Caco-2 (cell line): ENCODE measurements at regions of chr2 and their contacts with region 1.

Region 1: GRCh38 chr2:65264821-65265670 is 37.4 kb downstream of the ACTR2 start:
- DNase-seq: peak; percentile 47 to 68
- H3K4me3 ChIP-seq: no peak overlapping the region
- H3K4me3 Mint-ChIP-seq: no peak overlapping the region
- H3K27ac Mint-ChIP-seq: no peak overlapping the region
- H3K4me1 ChIP-seq: no peaks in the 10 kb centered on the region
- H3K4me1 Mint-ChIP-seq: peaks cover 10% of the 10 kb centered on the region
- H3K27me3 ChIP-seq: no peaks in the 10 kb centered on the region
- H3K27me3 Mint-ChIP-seq: no peaks in the 10 kb centered on the region
- CTCF ChIP-seq: peak; percentile 64 to 83

Region 2: GRCh38 chr2:65240657-65241056 is 24.4 kb before region 1 on chr2:
- CTCF ChIA-PET with region 1: no interaction called
- POLR2A ChIA-PET with region 1: no interaction called
- intact Hi-C with region 1: no loop called
- DNase-seq: no peak
- H3K4me3 ChIP-seq: no peak overlapping the region
- H3K4me3 Mint-ChIP-seq: no peak overlapping the region
- H3K27ac Mint-ChIP-seq: no peak overlapping the region
- H3K4me1 ChIP-seq: no peaks in the 10 kb centered on the region
- H3K4me1 Mint-ChIP-seq: no peaks in the 10 kb centered on the region
- H3K27me3 ChIP-seq: no peaks in the 10 kb centered on the region
- H3K27me3 Mint-ChIP-seq: no peaks in the 10 kb centered on the region
- CTCF ChIP-seq: no peak

Region 3: GRCh38 chr2:65300761-65301711 is 36.0 kb after region 1 on chr2:
- CTCF ChIA-PET with region 1: interaction called, 3 read pairs
- POLR2A ChIA-PET with region 1: no interaction called
- intact Hi-C with region 1: loop called (anchors 1 kb)
- DNase-seq: peak; percentile 76 to 80
- H3K4me3 ChIP-seq: no peak overlapping the region
- H3K4me3 Mint-ChIP-seq: peak overlapping the region; percentile 35
- H3K27ac Mint-ChIP-seq: peak overlapping the region; percentile 14
- H3K4me1 ChIP-seq: peaks cover 22% of the 10 kb centered on the region
- H3K4me1 Mint-ChIP-seq: peaks cover 23% of the 10 kb centered on the region
- H3K27me3 ChIP-seq: no peaks in the 10 kb centered on the region
- H3K27me3 Mint-ChIP-seq: no peaks in the 10 kb centered on the region
- CTCF ChIP-seq: no peak

Region 4: GRCh38 chr2:65320042-65320725 is 55.1 kb after region 1 on chr2:
- CTCF ChIA-PET with region 1: interaction called, 8 read pairs
- POLR2A ChIA-PET with region 1: no interaction called
- intact Hi-C with region 1: loop called (anchors 5 kb)
- DNase-seq: peak; percentile 69 to 80
- H3K4me3 ChIP-seq: no peak overlapping the region
- H3K4me3 Mint-ChIP-seq: peak overlapping the region; percentile 57
- H3K27ac Mint-ChIP-seq: peak overlapping the region; percentile 81
- H3K4me1 ChIP-seq: peaks cover 30% of the 10 kb centered on the region
- H3K4me1 Mint-ChIP-seq: peaks cover 16% of the 10 kb centered on the region
- H3K27me3 ChIP-seq: no peaks in the 10 kb centered on the region
- H3K27me3 Mint-ChIP-seq: no peaks in the 10 kb centered on the region
- CTCF ChIP-seq: peak; percentile 33 to 61

Region 5: GRCh38 chr2:65386989-65387388 is 121.9 kb after region 1 on chr2:
- CTCF ChIA-PET with region 1: no interaction called
- POLR2A ChIA-PET with region 1: no interaction called
- intact Hi-C with region 1: loop called (anchors 1 kb)
- DNase-seq: peak in 1 of 2 experiments; percentile 41
- H3K4me3 ChIP-seq: no peak overlapping the region
- H3K4me3 Mint-ChIP-seq: no peak overlapping the region
- H3K27ac Mint-ChIP-seq: no peak overlapping the region
- H3K4me1 ChIP-seq: peaks cover 4% of the 10 kb centered on the region
- H3K4me1 Mint-ChIP-seq: peaks cover 10% of the 10 kb centered on the region
- H3K27me3 ChIP-seq: no peaks in the 10 kb centered on the region
- H3K27me3 Mint-ChIP-seq: no peaks in the 10 kb centered on the region
- CTCF ChIP-seq: peak; percentile 16 to 59

Region 6: DNA sequence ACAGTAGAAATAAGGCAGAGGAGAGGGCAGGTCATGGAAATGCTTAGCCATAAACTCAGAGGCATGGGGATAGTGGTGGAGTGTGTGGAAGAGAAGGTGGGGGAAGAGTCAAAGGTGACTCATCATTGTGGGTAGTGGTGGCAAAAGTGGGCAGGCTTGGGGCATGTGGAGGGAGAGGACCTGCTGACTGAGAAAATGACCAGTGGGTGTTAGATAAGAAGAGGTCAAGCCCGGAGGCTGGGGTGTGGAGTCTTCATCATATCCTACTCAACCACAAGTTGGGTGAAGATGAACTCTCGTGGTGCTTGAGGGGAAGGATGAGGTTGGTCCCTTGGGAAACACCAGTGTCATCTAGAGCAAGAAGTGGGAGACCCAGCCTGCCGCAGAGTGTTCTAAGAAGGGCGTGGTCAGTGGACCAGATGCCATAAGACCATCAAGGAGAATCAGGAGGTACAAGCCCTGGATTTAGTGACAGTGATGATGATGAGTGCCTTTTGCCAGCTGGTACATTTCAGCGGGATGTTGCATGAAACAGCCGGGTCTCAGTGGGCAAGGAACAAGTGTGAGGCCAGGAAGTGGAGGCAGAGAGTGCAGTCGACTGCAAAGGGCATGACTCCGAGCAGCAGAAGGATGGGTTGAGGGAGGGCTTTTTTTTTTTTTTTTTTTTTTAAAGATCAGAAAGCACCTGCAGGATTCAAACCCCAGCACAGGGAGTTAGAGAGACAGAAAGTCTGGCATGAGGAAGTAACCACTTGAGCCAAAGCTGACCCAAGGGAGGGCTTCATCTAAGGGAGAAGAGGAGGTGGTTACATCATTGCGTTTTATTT is 289.9 kb after region 1 on chr2:
- CTCF ChIA-PET with region 1: interaction called, 4 read pairs
- POLR2A ChIA-PET with region 1: no interaction called
- intact Hi-C with region 1: loop called (anchors 1 kb)
- DNase-seq: no peak
- H3K4me3 ChIP-seq: no peak overlapping the region
- H3K4me3 Mint-ChIP-seq: no peak overlapping the region
- H3K27ac Mint-ChIP-seq: no peak overlapping the region
- H3K4me1 ChIP-seq: peaks cover 5% of the 10 kb centered on the region; the same call in 1 of the 2 replicates
- H3K4me1 Mint-ChIP-seq: no peaks in the 10 kb centered on the region
- H3K27me3 ChIP-seq: no peaks in the 10 kb centered on the region
- H3K27me3 Mint-ChIP-seq: peaks cover 8% of the 10 kb centered on the region
- CTCF ChIP-seq: no peak

Region 7: GRCh38 chr2:65576861-65577601 is 312.0 kb after region 1 on chr2:
- CTCF ChIA-PET with region 1: interaction called, 4 read pairs
- POLR2A ChIA-PET with region 1: no interaction called
- intact Hi-C with region 1: loop called (anchors 1 kb)
- DNase-seq: peak in 1 of 2 experiments; percentile 57
- H3K4me3 ChIP-seq: no peak overlapping the region
- H3K4me3 Mint-ChIP-seq: peak overlapping the region; percentile 15
- H3K27ac Mint-ChIP-seq: peak overlapping the region; percentile 87
- H3K4me1 ChIP-seq: peaks cover 12% of the 10 kb centered on the region
- H3K4me1 Mint-ChIP-seq: peaks cover 7% of the 10 kb centered on the region
- H3K27me3 ChIP-seq: no peaks in the 10 kb centered on the region
- H3K27me3 Mint-ChIP-seq: no peaks in the 10 kb centered on the region
- CTCF ChIP-seq: no peak

Region 8: GRCh38 chr2:65595641-65596040 is 330.6 kb after region 1 on chr2:
- CTCF ChIA-PET with region 1: no interaction called
- POLR2A ChIA-PET with region 1: no interaction called
- intact Hi-C with region 1: no loop called
- DNase-seq: no peak
- H3K4me3 ChIP-seq: no peak overlapping the region
- H3K4me3 Mint-ChIP-seq: no peak overlapping the region
- H3K27ac Mint-ChIP-seq: no peak overlapping the region
- H3K4me1 ChIP-seq: 0 out of 2 replicates have a peak, but pooled peaks cover 3% of the 10 kb centered on the region
- H3K4me1 Mint-ChIP-seq: no peaks in the 10 kb centered on the region
- H3K27me3 ChIP-seq: no peaks in the 10 kb centered on the region
- H3K27me3 Mint-ChIP-seq: peaks cover 5% of the 10 kb centered on the region
- CTCF ChIP-seq: no peak